SK-N-SH (cell line): ENCODE measurements at regions of chr20 and their contacts with region 1.

Region 1: DNA sequence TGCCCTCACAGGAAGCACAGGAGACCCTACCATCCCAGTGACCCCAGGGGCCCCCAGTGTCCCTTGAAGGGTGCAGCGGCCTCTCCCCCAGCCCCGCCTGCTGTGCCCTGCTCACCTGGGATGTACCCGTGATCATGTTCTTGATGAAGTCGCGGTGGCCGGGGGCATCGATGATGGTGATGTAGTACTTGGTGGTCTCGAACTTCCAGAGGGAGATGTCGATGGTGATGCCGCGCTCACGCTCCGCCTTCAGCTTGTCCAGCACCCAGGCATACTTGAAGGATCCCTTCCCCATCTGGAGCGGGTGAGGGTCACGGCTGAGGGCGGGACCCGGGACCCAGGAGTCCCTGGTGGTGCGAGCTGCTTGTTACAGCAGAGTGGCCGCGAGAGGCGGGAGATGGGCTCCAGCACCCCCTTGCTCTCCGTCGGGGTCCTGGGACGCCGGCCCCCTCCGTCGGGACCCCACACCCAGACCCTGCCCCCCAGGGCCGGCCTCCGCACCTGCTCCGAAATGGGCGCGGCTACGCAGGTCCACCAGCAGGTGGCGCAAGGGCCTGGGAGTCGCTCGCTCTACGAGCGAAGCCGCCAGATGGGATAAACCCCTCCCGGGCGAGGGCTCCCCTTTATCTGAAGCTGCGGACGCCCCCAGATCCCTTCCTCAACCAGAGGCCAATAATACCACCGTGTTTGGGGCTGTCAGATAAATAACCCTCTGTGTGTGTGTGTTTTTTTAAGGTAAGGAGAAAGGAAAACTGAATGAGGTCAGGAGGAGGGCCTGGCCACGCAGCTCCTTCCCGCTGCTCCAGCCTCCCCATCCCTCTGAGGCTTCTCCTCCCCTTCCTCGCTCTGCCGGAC is 2.9 kb downstream of the EEF1A2 start:
- DNase-seq: peak; percentile 90
- H3K4me3 ChIP-seq: peak overlapping the region; percentile 12 to 52; a peak in 2 of 4 replicates
- H3K27ac ChIP-seq: peak overlapping the region in 1 of 2 experiments; percentile 62; a peak in 1 of 4 replicates
- H3K4me1 ChIP-seq: peaks cover 0 to 30% of the 10 kb centered on the region in 2 experiments; a peak in 1 of 4 replicates
- H3K27me3 ChIP-seq: no peaks in the 10 kb centered on the region
- CTCF ChIP-seq: peak; percentile 91
- EP300 ChIP-seq: no peak
- RAD21 ChIP-seq: peak; percentile 65

Region 2: GRCh38 chr20:63442100-63442493 is 53.9 kb before region 1 on chr20:
- CTCF ChIA-PET with region 1: interaction called, 22 read pairs
- POLR2A ChIA-PET with region 1: no interaction called
- DNase-seq: peak; percentile 86
- H3K4me3 ChIP-seq: no peak overlapping the region
- H3K27ac ChIP-seq: peak overlapping the region in 1 of 2 experiments; percentile 62; a peak in 1 of 4 replicates
- H3K4me1 ChIP-seq: peaks cover 0 to 32% of the 10 kb centered on the region in 2 experiments; a peak in 1 of 4 replicates
- H3K27me3 ChIP-seq: no peaks in the 10 kb centered on the region
- CTCF ChIP-seq: peak; percentile 32
- EP300 ChIP-seq: no peak
- RAD21 ChIP-seq: peak; percentile 71

Region 3: GRCh38 chr20:63471983-63472831 is 23.8 kb before region 1 on chr20 and contains the start of gene KCNQ2:
- CTCF ChIA-PET with region 1: interaction called, 38 read pairs
- POLR2A ChIA-PET with region 1: interaction called, 4 read pairs
- DNase-seq: peak; percentile 87
- H3K4me3 ChIP-seq: peak within 1 kb of the TSS in 1 of 2 experiments; percentile 56; a peak in 2 of 4 replicates
- H3K27ac ChIP-seq: peak within 1 kb of the TSS in 1 of 2 experiments; percentile 86; a peak in 2 of 4 replicates
- H3K4me1 ChIP-seq: peaks cover 0 to 55% of the 10 kb centered on the region in 2 experiments; a peak in 1 of 4 replicates
- H3K27me3 ChIP-seq: peaks cover 26% of the 10 kb centered on the region
- CTCF ChIP-seq: no peak
- EP300 ChIP-seq: no peak
- RAD21 ChIP-seq: no peak
- polyA plus RNA-seq, gene KCNQ2: 3.9 and 8.3 TPM in 2 replicates

Region 4: DNA sequence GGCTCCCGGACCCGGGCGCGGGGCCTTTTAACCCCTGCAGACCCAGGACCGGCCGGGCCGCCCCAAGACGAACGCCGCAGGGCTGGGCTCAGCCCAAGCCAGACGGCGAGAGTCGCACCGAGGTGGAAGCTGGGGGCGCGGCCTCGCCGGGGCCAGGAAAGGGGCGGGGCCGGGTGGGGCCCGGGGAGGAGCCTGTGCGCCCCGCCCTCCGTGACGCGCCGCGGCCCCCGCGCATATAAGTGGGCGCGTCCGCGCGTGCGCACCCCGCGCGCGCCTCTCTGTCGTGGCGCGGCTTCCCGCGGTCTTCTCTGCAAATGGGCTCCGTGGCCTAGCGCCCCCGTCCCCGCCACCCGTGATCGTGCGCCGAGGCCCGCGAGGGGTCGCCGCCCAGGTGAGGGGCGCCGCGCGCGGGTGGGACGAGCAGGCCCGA is 24.6 kb after region 1 on chr20 and contains the start of gene PPDPF:
- CTCF ChIA-PET with region 1: interaction called, 76 read pairs
- POLR2A ChIA-PET with region 1: interaction called, 31 read pairs
- DNase-seq: peak; percentile 100
- H3K4me3 ChIP-seq: peak within 1 kb of the TSS; percentile 84 to 85
- H3K27ac ChIP-seq: peak within 1 kb of the TSS; percentile 66 to 81
- H3K4me1 ChIP-seq: peaks cover 4 to 26% of the 10 kb centered on the region in 2 experiments; a peak in 3 of 4 replicates
- H3K27me3 ChIP-seq: no peaks in the 10 kb centered on the region
- CTCF ChIP-seq: no peak
- EP300 ChIP-seq: no peak
- RAD21 ChIP-seq: no peak
- polyA plus RNA-seq, gene PPDPF: 20.0 and 71.4 TPM in 2 replicates